Naive thymus-derived CD4-positive, alpha-beta T cell (primary cell): ENCODE measurements at regions of chr3 and their contacts with region 1.

Region 1: DNA sequence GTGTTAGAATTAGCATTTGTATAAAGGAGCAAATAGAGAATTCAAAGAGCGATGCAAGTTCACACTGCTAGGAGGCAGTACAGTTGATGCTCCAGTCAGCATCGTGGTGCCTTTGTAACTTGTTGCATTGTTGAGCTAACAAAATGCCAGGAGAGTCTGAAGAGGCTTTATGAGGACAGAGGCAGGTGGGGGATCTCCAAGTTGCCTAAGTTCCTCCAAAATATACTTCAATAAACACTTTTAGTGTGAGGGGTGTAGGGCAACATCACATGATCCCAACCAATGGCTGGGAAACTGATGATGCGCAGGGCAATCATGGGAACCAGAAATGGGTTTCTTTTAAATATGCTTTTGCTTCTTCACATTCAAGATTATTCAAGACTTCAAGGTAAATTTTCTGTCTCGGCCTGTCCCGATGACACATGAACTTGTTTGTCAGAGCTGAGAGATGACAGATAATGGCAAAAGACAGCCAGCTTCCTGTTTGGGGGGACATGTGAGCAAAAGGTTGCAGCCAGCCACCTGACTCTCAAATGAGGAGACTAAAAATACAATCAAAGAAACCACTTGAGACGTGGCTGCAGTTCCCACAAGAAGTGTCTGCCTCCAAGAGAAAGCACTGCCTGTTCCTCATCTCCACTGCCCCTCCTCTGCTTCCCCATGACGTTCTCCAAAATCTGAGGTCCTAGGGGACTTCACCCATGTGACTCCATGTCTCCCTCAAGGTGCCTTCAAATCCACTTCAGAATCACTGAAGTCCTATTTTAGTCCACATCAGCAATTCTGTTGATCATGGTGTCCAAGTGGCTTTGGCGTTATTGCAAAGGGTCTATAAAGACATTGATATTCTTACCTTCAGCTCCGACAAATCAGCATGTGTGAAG is 39.3 kb downstream of the KLHL6 start:
- DNase-seq: peak in 8 of 9 donors; percentile 34 to 90 (median 77)
- ATAC-seq: peak; percentile 80
- H3K4me3 ChIP-seq: peak overlapping the region; percentile 8
- H3K4me3 Mint-ChIP-seq: peak overlapping the region; percentile 39 to 84 (median 68)
- H3K27ac ChIP-seq: peak overlapping the region; percentile 57
- H3K27ac Mint-ChIP-seq: peak overlapping the region; percentile 77 to 94 (median 89)
- H3K4me1 ChIP-seq: peaks cover 32 to 54% of the 10 kb centered on the region in 2 donors
- H3K4me1 Mint-ChIP-seq: peaks cover 60 to 95% (median 90%) of the 10 kb centered on the region in 7 donors
- H3K27me3 ChIP-seq: no peaks in the 10 kb centered on the region
- H3K27me3 Mint-ChIP-seq: no peaks in the 10 kb centered on the region

Region 2: GRCh38 chr3:183500319-183500718 is 15.9 kb before region 1 on chr3:
- CTCF ChIA-PET with region 1: interaction called, 4 read pairs
- POLR2A ChIA-PET with region 1: interaction called, 3 read pairs
- intact Hi-C with region 1: loop called in 1 of 2 experiments (anchors 2 kb)
- DNase-seq: no peak
- ATAC-seq: no peak
- H3K4me3 ChIP-seq: no peak overlapping the region
- H3K4me3 Mint-ChIP-seq: no peak overlapping the region
- H3K27ac ChIP-seq: no peak overlapping the region
- H3K27ac Mint-ChIP-seq: peak overlapping the region in 8 of 9 donors; percentile 10 to 57 (median 21)
- H3K4me1 ChIP-seq: no peaks in the 10 kb centered on the region
- H3K4me1 Mint-ChIP-seq: peaks cover 6 to 39% (median 16%) of the 10 kb centered on the region in 7 donors
- H3K27me3 ChIP-seq: no peaks in the 10 kb centered on the region
- H3K27me3 Mint-ChIP-seq: no peaks in the 10 kb centered on the region

Region 3: GRCh38 chr3:183527428-183528379 is 11.5 kb after region 1 on chr3:
- CTCF ChIA-PET with region 1: interaction called, 3 read pairs
- POLR2A ChIA-PET with region 1: interaction called, 5 read pairs
- intact Hi-C with region 1: loop called in 1 of 2 experiments (anchors 1 kb)
- DNase-seq: no peak
- ATAC-seq: peak; percentile 45
- H3K4me3 ChIP-seq: no peak overlapping the region
- H3K4me3 Mint-ChIP-seq: peak overlapping the region in 2 of 10 donors; percentile 20 to 86
- H3K27ac ChIP-seq: no peak overlapping the region
- H3K27ac Mint-ChIP-seq: peak overlapping the region; percentile 48 to 88 (median 71)
- H3K4me1 ChIP-seq: peaks cover 0 to 5% of the 10 kb centered on the region in 2 donors
- H3K4me1 Mint-ChIP-seq: peaks cover 35 to 65% (median 57%) of the 10 kb centered on the region in 7 donors
- H3K27me3 ChIP-seq: no peaks in the 10 kb centered on the region
- H3K27me3 Mint-ChIP-seq: no peaks in the 10 kb centered on the region

Region 4: GRCh38 chr3:183584246-183584913 is 68.2 kb after region 1 on chr3:
- CTCF ChIA-PET with region 1: no interaction called
- POLR2A ChIA-PET with region 1: no interaction called
- intact Hi-C with region 1: loop called in 1 of 2 experiments (anchors 2 kb)
- DNase-seq: no peak
- ATAC-seq: no peak
- H3K4me3 ChIP-seq: no peak overlapping the region
- H3K4me3 Mint-ChIP-seq: peak overlapping the region in 1 of 10 donors; percentile 24
- H3K27ac ChIP-seq: no peak overlapping the region
- H3K27ac Mint-ChIP-seq: peak overlapping the region in 8 of 9 donors; percentile 37 to 89 (median 70)
- H3K4me1 ChIP-seq: peaks cover 11 to 33% of the 10 kb centered on the region in 2 donors
- H3K4me1 Mint-ChIP-seq: peaks cover 31 to 72% (median 56%) of the 10 kb centered on the region in 7 donors
- H3K27me3 ChIP-seq: no peaks in the 10 kb centered on the region
- H3K27me3 Mint-ChIP-seq: peaks cover 0 to 3% (median 0%) of the 10 kb centered on the region in 5 donors

Region 5: DNA sequence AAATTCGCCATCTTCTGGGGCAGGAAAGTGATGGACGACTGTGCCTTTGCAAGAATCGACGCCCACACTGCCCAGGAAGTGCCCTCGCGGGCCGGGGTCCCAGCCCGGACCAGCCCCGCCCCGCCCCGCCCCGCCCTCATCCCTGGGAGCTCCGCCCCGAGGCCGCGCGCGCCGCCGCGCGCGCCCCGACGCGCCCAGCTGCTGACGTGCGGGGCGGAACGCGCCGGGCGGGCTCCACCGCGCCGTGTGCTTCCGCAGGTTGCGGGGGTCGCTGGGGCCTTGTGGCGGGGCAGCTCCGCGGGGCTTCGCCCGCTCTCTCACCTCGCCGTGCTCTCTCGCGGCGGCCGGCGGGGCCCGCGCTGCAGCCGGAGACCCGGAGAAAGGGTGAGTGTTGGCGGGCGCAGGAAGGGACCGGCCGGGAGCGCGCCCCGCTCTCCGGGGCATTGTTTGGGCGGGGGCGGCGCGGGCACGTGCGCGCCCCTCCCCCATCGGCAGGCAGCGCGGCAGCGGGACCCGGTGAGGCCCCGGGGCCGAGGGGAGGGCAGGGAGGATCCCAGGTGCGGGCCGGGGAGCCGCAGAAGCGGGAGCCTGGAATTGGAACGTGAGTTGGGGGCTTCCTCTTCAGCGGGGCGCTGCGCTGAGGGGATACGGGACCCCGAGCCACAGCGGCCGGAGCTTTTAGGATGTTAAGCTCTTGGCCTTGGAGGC is 181.6 kb after region 1 on chr3 and contains the start of gene YEATS2:
- CTCF ChIA-PET with region 1: no interaction called
- POLR2A ChIA-PET with region 1: no interaction called
- intact Hi-C with region 1: loop called in 1 of 2 experiments (anchors 5 kb)
- DNase-seq: peak; percentile 60 to 81 (median 74)
- ATAC-seq: peak; percentile 95
- H3K4me3 ChIP-seq: peak within 1 kb of the TSS; percentile 89
- H3K4me3 Mint-ChIP-seq: peak within 1 kb of the TSS; percentile 84 to 99 (median 94)
- H3K27ac ChIP-seq: peak within 1 kb of the TSS; percentile 84
- H3K27ac Mint-ChIP-seq: peak within 1 kb of the TSS; percentile 74 to 97 (median 90)
- H3K4me1 ChIP-seq: peaks cover 9 to 18% of the 10 kb centered on the region in 2 donors
- H3K4me1 Mint-ChIP-seq: peaks cover 32 to 50% (median 40%) of the 10 kb centered on the region in 7 donors
- H3K27me3 ChIP-seq: no peaks in the 10 kb centered on the region
- H3K27me3 Mint-ChIP-seq: no peaks in the 10 kb centered on the region
- total RNA-seq, gene YEATS2: 20.6 to 61.4 (median 21.9) TPM